Activated CD4-positive, alpha-beta memory T cell treated with anti-CD3 and anti-CD28 coated beads, Interleukin-2, amount 10 ng/mL, durations not matched to agents 7 days and 5 days (primary cell): ENCODE measurements at regions of chr6 and their contacts with region 1.

Region 1: GRCh38 chr6:133916650-133917151 is 27.8 kb downstream of the TCF21 start:
- DNase-seq: peak; percentile 76
- H3K4me3 Mint-ChIP-seq: no peak overlapping the region
- H3K27ac Mint-ChIP-seq: no peak overlapping the region
- H3K4me1 Mint-ChIP-seq: no peaks in the 10 kb centered on the region
- H3K27me3 Mint-ChIP-seq: peaks cover 28% of the 10 kb centered on the region

Region 2: DNA sequence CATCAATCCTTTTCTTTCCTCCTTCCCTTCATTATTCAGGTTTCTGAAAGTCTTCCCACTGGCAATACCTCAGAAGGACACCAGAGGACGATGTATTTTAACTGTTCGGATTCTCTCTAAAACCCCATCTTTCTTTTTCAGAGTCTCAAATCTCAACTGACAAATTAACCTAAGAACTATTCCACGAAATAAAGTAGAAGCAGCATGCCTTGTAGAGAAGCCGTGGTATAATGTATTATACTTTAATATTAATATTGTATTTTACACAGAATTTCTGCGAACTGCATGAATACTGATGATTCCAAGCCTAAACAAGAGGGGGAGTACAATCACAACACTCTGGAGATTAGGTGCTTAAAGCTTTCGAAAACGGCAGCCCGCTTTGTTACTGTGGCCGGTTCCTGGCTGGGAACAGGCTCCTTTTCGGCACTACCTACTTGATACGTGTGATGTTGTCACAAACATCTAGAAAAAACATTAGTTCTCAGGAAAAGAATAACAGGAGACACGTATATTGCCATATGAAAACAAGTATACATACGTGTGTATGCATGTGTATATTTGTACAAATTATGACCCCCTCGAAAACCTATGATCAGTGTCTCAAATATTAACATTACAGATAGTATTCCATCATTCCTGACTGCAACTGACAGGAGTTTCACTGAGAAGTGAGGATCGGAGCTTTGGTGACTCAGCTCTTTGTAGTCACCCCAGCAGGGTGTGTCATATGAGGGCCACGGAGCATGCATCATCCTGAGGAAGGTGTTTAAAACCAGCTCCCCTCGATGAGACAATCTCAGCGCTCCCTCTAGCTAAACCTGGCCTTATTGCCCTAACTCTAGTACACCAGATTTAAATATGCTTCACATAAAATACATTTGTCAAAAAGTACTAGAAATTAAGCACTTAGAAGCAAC is 347.5 kb before region 1 on chr6:
- CTCF ChIA-PET with region 1: interaction called, 13 read pairs
- POLR2A ChIA-PET with region 1: no interaction called
- DNase-seq: no peak
- H3K4me3 Mint-ChIP-seq: no peak overlapping the region
- H3K27ac Mint-ChIP-seq: no peak overlapping the region
- H3K4me1 Mint-ChIP-seq: peaks cover 2% of the 10 kb centered on the region
- H3K27me3 Mint-ChIP-seq: peaks cover 15% of the 10 kb centered on the region

Region 3: DNA sequence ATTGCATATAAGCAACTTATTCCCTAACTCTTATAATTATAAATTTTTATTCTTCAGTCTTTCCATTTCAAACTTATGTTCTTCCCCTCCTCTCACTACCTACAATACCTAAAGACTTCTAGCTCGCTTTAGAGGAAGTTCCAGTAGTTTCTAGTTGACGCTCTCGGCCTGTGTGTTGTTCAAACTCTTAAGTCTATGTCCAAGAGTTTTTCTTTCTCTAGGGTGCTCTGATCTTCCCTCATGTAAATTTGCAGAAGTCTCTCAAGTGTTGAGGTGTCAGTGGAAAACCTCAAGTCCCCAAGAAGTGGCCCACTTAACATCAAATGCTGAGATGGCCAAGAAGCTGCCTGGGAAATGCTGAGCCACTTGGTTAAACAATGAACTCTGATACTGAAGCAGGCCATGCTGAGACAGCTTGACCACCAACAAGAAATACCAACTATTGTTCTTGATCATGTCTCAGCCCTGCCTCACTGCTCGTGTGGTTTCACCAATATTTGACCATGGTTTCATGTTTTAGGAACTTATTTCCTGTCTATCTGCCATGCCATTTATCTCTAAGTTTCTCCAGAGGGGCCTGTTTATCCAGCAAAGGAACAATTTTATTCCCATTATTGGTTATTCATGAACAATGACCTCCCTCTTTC is 128.7 kb before region 1 on chr6:
- CTCF ChIA-PET with region 1: no interaction called
- POLR2A ChIA-PET with region 1: no interaction called
- DNase-seq: no peak
- H3K4me3 Mint-ChIP-seq: no peak overlapping the region
- H3K27ac Mint-ChIP-seq: no peak overlapping the region
- H3K4me1 Mint-ChIP-seq: no peaks in the 10 kb centered on the region
- H3K27me3 Mint-ChIP-seq: no peaks in the 10 kb centered on the region

Region 4: GRCh38 chr6:133837801-133838349 is 78.8 kb before region 1 on chr6:
- CTCF ChIA-PET with region 1: interaction called, 51 read pairs
- POLR2A ChIA-PET with region 1: no interaction called
- DNase-seq: peak; percentile 61
- H3K4me3 Mint-ChIP-seq: peak overlapping the region; percentile 56
- H3K27ac Mint-ChIP-seq: no peak overlapping the region
- H3K4me1 Mint-ChIP-seq: peaks cover 6% of the 10 kb centered on the region
- H3K27me3 Mint-ChIP-seq: peaks cover 13% of the 10 kb centered on the region

Region 5: DNA sequence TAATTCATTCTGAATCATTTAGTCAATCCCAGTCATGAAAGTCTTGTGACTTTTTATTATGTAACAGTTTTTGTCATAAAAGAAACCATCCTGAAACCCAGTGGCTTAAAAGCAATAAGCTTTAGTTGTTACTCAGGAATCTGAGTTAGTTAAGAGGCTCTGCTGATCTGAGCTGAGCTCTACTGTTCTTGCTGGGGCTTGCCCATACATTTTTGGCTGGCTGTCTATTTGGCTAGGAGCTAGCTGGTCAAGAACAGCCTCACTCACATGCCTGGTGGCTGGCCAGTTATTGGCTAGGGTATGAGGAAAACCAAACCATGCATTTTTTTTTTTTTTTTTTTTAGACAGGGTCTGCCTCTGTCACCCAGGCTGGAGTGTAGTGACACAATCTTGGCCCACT is 17.1 kb before region 1 on chr6:
- CTCF ChIA-PET with region 1: interaction called, 11 read pairs
- POLR2A ChIA-PET with region 1: no interaction called
- DNase-seq: no peak
- H3K4me3 Mint-ChIP-seq: no peak overlapping the region
- H3K27ac Mint-ChIP-seq: no peak overlapping the region
- H3K4me1 Mint-ChIP-seq: no peaks in the 10 kb centered on the region
- H3K27me3 Mint-ChIP-seq: peaks cover 61% of the 10 kb centered on the region